ENCODE measurements at regions of chr3 and their contacts with region 1.

Region 1: DNA sequence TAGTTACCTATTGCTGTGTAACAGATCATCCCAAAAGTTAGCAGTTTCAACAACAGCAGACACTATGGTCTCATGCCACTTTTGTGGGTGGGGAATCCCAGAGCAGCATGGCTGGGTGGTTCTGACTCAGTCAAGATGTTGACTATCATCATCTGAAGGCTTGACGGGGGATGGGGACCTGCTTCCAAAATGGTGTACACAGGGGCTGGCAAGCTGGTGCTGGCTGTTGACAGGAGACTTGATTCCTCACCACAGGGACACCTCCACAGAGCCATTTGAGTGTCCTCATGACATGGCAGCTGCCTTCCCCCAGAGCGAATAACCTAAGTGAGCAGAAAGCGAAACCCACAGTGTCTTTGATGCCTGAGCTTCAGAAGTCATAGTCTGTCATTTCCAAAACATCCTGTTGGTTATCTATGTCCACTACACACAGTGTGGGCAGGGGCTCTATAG is 19.1 kb downstream of the DNAJB8 start:
- DNase-seq: peak; percentile 92
- ATAC-seq: peak; percentile 82
- H3K4me3 Mint-ChIP-seq: peak overlapping the region; percentile 28
- H3K27ac Mint-ChIP-seq: peak overlapping the region; percentile 93
- H3K4me1 Mint-ChIP-seq: peaks cover 40% of the 10 kb centered on the region
- H3K27me3 Mint-ChIP-seq: peaks cover 2% of the 10 kb centered on the region

Region 2: DNA sequence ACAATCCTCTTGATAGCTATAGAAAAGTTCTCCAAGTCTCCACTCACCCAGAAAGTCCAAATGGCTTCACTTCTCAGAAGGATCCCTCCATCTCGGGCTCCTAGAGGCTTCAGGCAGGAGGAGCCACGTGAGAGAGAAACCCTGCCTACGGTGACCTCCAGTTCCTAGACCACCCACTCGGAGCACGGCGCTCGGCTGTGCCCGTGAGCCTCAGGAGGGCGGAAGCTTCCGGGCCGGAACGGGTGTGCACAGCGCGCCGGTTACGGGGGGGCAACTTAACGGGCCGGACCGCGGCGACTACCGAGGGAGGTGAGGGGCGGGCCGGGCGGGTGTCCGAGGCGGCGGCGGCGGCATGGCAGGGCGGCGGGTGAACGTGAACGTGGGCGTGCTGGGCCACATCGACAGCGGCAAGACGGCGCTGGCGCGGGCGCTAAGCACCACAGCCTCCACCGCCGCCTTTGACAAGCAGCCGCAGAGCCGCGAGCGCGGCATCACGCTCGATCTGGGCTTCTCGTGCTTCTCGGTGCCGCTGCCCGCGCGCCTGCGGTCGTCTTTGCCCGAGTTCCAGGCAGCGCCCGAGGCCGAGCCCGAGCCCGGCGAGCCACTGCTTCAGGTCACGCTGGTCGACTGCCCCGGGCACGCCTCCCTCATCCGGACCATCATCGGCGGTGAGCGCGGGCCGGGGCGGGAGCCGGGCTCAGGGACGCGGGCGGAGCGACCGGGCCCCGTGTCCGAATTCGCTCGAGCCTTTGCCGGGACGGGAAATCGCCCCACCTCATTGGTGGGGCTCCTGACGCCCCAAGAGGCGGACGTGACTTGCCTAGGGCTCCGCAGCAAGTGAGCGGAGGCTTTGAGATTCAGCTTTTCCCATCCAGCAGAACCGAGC is 294.2 kb before region 1 on chr3 and contains the start of gene EEFSEC:
- CTCF ChIA-PET with region 1: no interaction called
- POLR2A ChIA-PET with region 1: no interaction called
- intact Hi-C with region 1: loop called in 1 of 2 experiments (anchors 2 kb)
- DNase-seq: peak; percentile 91
- ATAC-seq: peak; percentile 95
- H3K4me3 Mint-ChIP-seq: peak within 1 kb of the TSS; percentile 80
- H3K27ac Mint-ChIP-seq: peak within 1 kb of the TSS; percentile 85
- H3K4me1 Mint-ChIP-seq: peaks cover 25% of the 10 kb centered on the region
- H3K27me3 Mint-ChIP-seq: no peaks in the 10 kb centered on the region
- total RNA-seq, gene EEFSEC: 19.6 to 20.7 TPM

Region 3: DNA sequence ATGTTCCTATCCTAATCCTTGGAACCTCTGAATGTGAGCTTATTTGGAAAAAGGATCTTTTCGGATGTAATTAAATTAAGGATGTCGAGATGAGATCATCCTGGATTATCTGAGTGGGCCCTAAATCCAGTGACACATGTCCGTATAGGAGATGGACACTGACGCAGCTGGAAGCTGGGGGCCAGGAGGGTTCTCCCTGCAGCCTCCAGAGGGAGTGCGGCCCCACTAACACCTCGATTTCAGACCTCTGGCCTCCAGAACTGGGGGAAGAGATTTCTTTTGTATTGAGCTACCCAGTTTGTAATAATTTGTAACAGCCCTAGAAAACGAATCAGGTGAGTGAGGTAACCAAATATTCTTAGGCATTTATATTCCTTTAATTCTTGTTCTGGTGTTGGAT is 16.6 kb after region 1 on chr3:
- CTCF ChIA-PET with region 1: interaction called, 11 read pairs
- POLR2A ChIA-PET with region 1: interaction called, 3 read pairs
- intact Hi-C with region 1: no loop called
- DNase-seq: no peak
- ATAC-seq: no peak
- H3K4me3 Mint-ChIP-seq: no peak overlapping the region
- H3K27ac Mint-ChIP-seq: no peak overlapping the region
- H3K4me1 Mint-ChIP-seq: peaks cover 7% of the 10 kb centered on the region
- H3K27me3 Mint-ChIP-seq: peaks cover 9% of the 10 kb centered on the region

Region 4: DNA sequence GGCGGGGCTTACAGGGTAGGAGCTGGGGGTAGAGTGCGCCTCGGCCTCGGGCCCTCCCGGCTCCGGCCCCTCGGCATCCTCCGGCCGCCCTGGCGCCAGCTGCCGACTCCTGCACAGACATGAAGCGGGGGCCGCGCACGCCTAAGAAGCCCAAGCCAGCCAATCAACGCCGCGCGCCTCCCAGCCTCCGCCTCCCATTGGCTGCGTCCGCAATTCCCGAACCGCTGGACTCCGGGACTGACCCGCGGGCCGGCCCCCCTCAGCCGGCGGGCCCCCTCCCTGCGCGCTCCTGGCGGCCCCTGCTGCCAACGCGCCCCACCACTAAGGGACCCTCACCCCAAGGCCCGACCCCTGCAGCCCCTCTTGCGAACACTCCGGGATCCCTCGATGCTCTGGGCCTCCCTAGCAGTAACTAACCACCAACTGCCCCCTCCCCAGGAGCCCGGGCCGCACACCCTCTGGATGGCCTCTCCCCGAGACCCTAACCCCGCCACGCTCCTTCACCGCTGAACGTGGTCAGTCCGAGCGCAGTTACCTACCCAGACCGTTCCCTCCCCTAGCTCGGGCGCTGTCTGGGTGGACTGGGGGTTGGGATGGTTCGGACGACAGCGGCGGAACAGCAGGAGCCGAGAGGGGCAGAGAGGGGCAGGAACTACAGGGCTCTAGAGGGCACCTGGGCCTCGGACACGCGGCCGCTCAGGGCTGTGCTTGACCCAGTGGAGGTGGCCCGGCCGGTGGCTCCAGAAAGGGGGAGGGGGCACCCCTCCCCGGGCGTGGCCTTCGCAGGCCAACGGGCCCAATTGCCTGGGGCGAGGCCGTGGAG is 40.4 kb after region 1 on chr3:
- CTCF ChIA-PET with region 1: no interaction called
- POLR2A ChIA-PET with region 1: no interaction called
- intact Hi-C with region 1: loop called (anchors 2 to 5 kb)
- DNase-seq: peak; percentile 64
- ATAC-seq: peak; percentile 49
- H3K4me3 Mint-ChIP-seq: peak overlapping the region; percentile 70
- H3K27ac Mint-ChIP-seq: no peak overlapping the region
- H3K4me1 Mint-ChIP-seq: peaks cover 31% of the 10 kb centered on the region
- H3K27me3 Mint-ChIP-seq: peaks cover 63% of the 10 kb centered on the region

Region 5: DNA sequence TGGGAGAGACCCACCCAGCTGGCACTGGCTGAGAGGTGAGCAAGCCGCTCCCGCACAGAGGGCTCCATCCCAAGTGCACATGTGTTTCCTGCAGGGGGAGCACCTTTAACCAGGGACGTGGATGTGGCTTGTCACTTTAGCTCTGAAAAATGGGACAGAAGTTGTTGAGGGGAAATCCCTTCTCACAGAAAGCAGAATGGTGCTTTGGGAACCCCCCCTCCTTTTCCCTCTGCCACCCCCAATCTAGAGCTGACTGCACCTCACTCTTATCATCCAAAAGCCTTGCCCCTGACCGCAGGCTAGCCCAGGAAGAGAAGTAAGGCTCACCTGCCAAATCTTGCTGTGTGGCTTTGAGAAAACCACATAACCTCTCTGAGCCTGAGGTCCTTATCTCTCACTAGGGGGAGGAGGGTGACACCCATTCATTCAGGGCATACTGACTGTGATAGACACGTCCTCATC is 125.1 kb after region 1 on chr3:
- CTCF ChIA-PET with region 1: no interaction called
- POLR2A ChIA-PET with region 1: no interaction called
- intact Hi-C with region 1: loop called in 1 of 2 experiments (anchors 1 kb)
- DNase-seq: peak; percentile 79
- ATAC-seq: peak; percentile 82
- H3K4me3 Mint-ChIP-seq: no peak overlapping the region
- H3K27ac Mint-ChIP-seq: peak overlapping the region; percentile 9
- H3K4me1 Mint-ChIP-seq: peaks cover 17% of the 10 kb centered on the region
- H3K27me3 Mint-ChIP-seq: peaks cover 11% of the 10 kb centered on the region

Region 6: DNA sequence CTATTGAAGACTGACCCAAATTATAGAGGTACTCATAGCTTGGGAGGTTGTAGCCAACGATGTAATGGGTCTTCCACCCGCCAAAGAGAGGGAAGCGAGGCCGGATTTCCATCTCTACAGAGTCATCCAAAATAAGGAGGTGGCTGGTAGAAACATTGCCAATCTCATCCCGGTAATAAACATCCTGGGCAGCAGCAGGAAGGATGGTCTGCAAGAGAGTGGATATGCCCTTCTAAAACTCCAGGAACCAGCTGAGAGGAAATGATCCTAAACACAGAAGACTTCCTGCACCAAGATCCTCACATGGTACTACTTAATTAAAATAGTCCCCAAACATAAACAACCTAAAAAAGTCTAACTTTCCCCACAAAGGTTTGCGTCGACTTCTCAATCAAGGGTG is 182.3 kb after region 1 on chr3:
- CTCF ChIA-PET with region 1: no interaction called
- POLR2A ChIA-PET with region 1: no interaction called
- intact Hi-C with region 1: no loop called
- DNase-seq: no peak
- ATAC-seq: no peak
- H3K4me3 Mint-ChIP-seq: no peak overlapping the region
- H3K27ac Mint-ChIP-seq: no peak overlapping the region
- H3K4me1 Mint-ChIP-seq: no peaks in the 10 kb centered on the region
- H3K27me3 Mint-ChIP-seq: no peaks in the 10 kb centered on the region

Region 7: GRCh38 chr3:128787256-128788240 is 340.0 kb after region 1 on chr3:
- CTCF ChIA-PET with region 1: no interaction called
- POLR2A ChIA-PET with region 1: no interaction called
- intact Hi-C with region 1: loop called in 1 of 2 experiments (anchors 5 kb)
- DNase-seq: peak; percentile 62
- ATAC-seq: peak; percentile 73
- H3K4me3 Mint-ChIP-seq: peak overlapping the region; percentile 73
- H3K27ac Mint-ChIP-seq: peak overlapping the region; percentile 100
- H3K4me1 Mint-ChIP-seq: peaks cover 97% of the 10 kb centered on the region
- H3K27me3 Mint-ChIP-seq: no peaks in the 10 kb centered on the region